ENCODE measurements at regions of chr15 and their contacts with region 1.

Region 1: GRCh38 chr15:81265944-81266775 is 57.8 kb downstream of the STARD5 start:
- DNase-seq: peak; percentile 87
- ATAC-seq: peak; percentile 95

Region 2: DNA sequence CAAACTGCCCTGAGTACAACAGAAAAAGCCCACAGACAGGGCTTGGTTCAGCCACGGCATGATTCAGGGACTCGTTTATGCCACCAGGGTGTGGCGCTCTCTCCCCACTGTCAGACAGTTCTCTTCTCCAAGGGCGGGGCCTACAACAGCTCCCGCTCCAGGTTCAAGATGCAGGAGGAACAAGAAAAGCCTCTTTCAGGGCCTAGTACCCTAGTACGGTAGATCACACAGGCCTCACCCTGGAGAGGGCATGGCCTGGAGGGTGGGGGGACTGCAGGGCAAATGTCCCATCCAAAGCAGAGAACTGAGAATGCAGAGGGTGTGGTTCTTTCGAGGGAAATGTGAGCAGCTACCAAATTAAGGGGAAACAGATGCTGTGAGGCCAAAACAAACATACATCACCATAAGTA is 288.5 kb before region 1 on chr15:
- intact Hi-C with region 1: loop called (anchors 5 kb)
- DNase-seq: no peak
- ATAC-seq: peak; percentile 77

Region 3: GRCh38 chr15:80989518-80990478 is 276.4 kb before region 1 on chr15 and contains the start of gene MESD:
- intact Hi-C with region 1: loop called (anchors 5 kb)
- DNase-seq: peak; percentile 99
- ATAC-seq: peak; percentile 98
- total RNA-seq, gene MESD: 14.0 TPM

Region 4: GRCh38 chr15:81106560-81106959 is 159.6 kb before region 1 on chr15:
- intact Hi-C with region 1: loop called (anchors 1 kb)
- DNase-seq: no peak
- ATAC-seq: peak; percentile 66

Region 5: DNA sequence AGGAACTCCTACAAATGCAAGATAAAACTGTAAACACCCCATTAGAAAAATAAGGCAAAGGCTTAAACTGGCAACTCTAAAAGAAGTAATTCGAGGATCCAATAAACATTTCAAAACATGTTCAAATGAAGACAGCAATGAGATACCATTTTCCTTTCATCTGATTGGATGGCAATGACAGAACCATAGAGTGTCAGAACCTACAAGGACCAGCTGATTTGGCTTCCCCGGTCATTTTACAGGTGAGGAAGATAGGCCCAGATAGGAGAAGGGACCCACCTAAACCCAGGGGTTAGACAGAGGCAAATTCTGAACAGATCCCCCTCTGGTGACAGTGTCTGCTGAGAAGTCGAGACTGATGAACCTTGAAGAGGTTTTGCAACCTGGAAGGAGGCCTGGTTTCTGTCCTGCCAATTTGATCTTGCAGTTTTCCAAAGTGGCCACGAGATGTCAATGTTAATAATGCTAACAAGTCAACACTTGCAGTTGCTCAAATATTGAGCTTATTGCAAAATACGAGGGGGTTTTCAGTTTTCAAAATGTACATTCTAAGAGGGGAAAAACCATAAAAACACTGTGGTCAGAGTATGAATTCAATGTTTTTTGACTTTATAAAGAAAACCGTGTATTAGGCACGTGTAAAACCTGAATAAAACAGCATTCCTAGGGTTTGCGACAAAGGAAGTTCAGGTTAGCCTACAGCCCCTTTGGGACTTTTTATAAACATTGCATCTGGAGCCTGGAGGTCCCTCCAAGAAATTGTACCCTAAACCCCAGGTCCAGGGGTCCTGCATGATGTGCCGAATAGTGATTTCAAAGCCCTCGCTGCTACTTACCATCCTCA is 110.6 kb before region 1 on chr15:
- intact Hi-C with region 1: loop called (anchors 2 kb)
- DNase-seq: no peak
- ATAC-seq: peak; percentile 43

Region 6: GRCh38 chr15:81182756-81183438 is 83.3 kb before region 1 on chr15:
- intact Hi-C with region 1: no loop called
- DNase-seq: peak; percentile 67
- ATAC-seq: peak; percentile 77

Region 7: DNA sequence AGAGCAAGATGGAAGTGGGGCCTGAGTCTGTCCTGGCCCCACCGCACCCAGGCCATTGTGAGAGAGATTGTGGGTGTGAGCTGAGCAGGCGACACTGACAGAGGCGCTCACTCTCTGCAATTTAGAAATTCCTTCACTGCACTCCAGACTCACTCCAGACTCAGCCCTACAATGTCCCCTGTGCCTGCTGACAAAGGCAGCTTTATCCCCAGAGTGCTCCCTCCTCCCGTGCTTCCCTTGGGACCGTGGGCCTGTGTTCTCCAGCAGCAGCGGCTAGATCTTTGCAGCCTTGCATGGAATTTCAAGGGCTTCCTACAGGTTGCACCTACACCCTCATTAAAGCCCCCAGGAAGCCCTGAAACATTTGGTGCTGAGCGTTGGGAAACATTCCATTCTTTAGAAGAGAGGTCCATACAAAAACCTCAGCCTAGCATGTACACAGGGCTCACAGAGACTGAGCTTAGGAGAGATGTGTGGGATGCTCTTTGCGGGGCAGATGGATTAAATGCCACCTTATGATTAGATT is 70.8 kb before region 1 on chr15:
- intact Hi-C with region 1: no loop called
- DNase-seq: no peak
- ATAC-seq: no peak

Region 8: GRCh38 chr15:81410318-81410753 is 144.2 kb after region 1 on chr15:
- intact Hi-C with region 1: no loop called
- DNase-seq: peak; percentile 65
- ATAC-seq: peak; percentile 89